MCF 10A (cell line): ENCODE measurements at regions of chr1 and their contacts with region 1.

Region 1: GRCh38 chr1:229227298-229227919 is 43.5 kb upstream of the RAB4A start:
- DNase-seq: peak; percentile 94
- H3K4me3 Mint-ChIP-seq: peak overlapping the region; percentile 5
- H3K27ac Mint-ChIP-seq: peak overlapping the region; percentile 1
- H3K4me1 Mint-ChIP-seq: peaks cover 66% of the 10 kb centered on the region
- H3K27me3 Mint-ChIP-seq: no peaks in the 10 kb centered on the region
- CTCF ChIP-seq: peak; percentile 99

Region 2: DNA sequence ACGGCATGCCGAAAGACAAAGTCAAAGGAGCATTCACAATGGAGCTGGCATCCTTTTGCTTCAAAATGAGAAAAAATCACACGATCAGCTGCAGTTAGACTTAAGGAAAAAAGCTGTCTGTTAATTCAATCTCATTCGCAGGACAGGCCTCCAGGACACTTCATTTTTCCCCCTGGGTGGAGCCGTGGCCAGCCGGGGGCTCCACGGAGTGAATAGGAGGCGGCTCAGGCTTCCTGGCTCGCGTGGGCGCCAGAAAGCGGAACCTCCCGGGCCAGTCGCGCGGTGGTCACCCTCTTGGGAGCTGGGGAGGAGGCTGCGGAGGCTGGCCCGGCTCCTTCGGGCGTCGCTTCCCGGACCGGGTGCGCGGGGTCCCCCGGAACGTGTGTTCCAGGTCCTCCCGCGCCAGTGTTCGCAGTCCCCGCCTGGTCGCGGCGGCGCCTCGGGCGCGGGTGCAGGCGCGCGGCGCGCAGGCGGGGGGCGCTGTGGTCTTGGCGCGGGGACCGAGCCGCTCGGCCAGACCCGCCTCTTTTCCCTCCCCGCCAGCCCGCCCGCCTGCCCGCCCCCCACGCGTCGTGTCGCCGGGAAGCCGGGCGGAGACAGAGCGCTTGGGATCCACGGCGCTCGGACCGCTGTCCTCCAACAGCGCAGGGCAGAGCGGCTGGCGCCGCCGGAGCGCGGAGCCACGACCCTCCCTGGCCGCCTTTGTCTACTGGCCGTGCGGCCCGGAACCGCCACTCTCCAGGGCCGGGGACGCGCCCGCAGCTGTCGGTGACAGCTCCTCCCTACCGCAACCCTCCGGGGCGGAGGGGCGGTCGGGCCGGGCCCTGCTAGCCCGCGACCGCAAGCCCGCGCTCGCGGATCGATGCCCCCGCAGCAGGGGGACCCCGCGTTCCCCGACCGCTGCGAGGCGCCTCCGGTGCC is 492.3 kb before region 1 on chr1 and contains the start of gene RHOU:
- CTCF ChIA-PET with region 1: interaction called, 95 read pairs
- POLR2A ChIA-PET with region 1: interaction called, 32 read pairs
- intact Hi-C with region 1: loop called (anchors 1 kb)
- DNase-seq: peak; percentile 55
- H3K4me3 Mint-ChIP-seq: peak within 1 kb of the TSS; percentile 72
- H3K27ac Mint-ChIP-seq: peak within 1 kb of the TSS; percentile 61
- H3K4me1 Mint-ChIP-seq: peaks cover 12% of the 10 kb centered on the region
- H3K27me3 Mint-ChIP-seq: peaks cover 9% of the 10 kb centered on the region
- CTCF ChIP-seq: peak; percentile 98
- total RNA-seq, gene RHOU: 2.1 and 3.6 TPM in 2 replicates

Region 3: DNA sequence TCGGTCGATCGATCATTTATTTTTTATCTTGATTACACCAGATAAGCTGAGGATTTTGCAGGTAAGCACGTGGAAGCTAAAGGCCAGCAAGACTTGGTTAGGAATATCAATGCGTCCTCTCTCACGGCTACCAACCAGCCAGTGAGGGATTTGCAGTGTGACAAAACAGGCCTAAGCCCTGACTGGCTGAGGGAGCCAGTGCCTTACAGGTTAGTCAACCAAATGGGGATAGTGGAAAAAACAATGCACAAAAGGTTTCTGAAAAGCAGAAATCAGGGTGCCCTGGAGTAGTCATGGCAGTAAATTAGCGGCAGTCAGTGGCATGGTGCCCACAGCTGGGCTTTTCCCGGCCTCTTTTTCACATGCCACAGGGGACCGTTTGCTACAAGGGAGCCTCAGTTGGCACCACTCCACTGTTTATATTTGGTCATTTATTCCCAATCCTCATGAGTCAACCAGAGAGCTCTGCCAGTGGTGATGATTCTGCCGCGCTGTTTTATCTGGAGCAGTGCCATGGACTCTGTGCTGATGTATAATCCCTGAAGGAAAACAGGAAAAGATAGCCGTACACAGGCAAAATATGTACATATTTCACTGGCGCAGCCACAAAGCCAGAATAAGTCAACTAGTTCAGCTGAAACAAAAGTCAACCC is 324.5 kb before region 1 on chr1:
- CTCF ChIA-PET with region 1: interaction called, 5 read pairs
- POLR2A ChIA-PET with region 1: interaction called, 18 read pairs
- intact Hi-C with region 1: loop called (anchors 1 kb)
- DNase-seq: peak; percentile 100
- H3K4me3 Mint-ChIP-seq: peak overlapping the region; percentile 57
- H3K27ac Mint-ChIP-seq: peak overlapping the region; percentile 89
- H3K4me1 Mint-ChIP-seq: peaks cover 30% of the 10 kb centered on the region
- H3K27me3 Mint-ChIP-seq: peaks cover 75% of the 10 kb centered on the region
- CTCF ChIP-seq: no peak

Region 4: DNA sequence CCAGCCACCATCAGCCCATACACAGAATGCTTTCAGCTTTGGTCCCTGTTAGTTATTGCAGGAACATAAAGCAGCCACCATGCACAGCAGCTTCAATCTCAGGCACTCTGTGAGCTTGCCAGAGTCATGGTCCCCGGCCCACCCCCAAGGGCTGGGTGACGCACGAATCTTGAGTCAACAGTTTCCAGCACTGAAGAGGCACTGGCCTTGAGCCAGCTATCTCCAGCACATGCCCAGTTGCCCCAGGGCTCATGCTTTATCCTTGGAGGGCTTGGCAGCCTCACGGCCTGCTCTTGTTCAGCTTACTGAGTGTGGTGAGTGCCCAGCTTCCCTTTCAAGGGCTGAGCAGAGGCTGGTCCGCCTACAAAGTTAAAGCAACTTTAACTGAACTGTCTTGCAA is 157.2 kb before region 1 on chr1:
- CTCF ChIA-PET with region 1: interaction called, 6 read pairs
- POLR2A ChIA-PET with region 1: interaction called, 11 read pairs
- intact Hi-C with region 1: no loop called
- DNase-seq: peak; percentile 100
- H3K4me3 Mint-ChIP-seq: no peak overlapping the region
- H3K27ac Mint-ChIP-seq: no peak overlapping the region
- H3K4me1 Mint-ChIP-seq: peaks cover 23% of the 10 kb centered on the region
- H3K27me3 Mint-ChIP-seq: peaks cover 20% of the 10 kb centered on the region
- CTCF ChIP-seq: no peak

Region 5: DNA sequence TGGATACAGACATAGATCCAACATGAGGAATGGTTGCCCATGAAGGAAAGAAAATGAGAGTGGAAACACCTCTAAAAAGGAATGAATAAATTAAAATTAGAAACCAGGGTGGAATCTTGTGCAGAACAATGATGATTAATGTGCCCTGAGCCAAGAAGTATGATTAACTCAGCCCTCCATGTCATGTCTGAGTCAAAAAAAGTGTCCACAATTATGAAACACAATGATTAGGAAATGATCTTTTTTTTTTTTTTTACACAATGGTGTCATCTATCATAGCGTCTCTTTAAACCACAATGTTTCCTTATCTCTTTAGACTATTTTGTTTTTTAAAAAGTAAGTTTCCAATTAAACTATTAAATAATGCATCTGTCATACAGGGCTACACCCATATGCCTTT is 35.4 kb before region 1 on chr1:
- CTCF ChIA-PET with region 1: interaction called, 9 read pairs
- POLR2A ChIA-PET with region 1: interaction called, 23 read pairs
- intact Hi-C with region 1: no loop called
- DNase-seq: peak; percentile 94
- H3K4me3 Mint-ChIP-seq: peak overlapping the region; percentile 35
- H3K27ac Mint-ChIP-seq: peak overlapping the region; percentile 80
- H3K4me1 Mint-ChIP-seq: peaks cover 41% of the 10 kb centered on the region
- H3K27me3 Mint-ChIP-seq: no peaks in the 10 kb centered on the region
- CTCF ChIP-seq: no peak

Region 6: DNA sequence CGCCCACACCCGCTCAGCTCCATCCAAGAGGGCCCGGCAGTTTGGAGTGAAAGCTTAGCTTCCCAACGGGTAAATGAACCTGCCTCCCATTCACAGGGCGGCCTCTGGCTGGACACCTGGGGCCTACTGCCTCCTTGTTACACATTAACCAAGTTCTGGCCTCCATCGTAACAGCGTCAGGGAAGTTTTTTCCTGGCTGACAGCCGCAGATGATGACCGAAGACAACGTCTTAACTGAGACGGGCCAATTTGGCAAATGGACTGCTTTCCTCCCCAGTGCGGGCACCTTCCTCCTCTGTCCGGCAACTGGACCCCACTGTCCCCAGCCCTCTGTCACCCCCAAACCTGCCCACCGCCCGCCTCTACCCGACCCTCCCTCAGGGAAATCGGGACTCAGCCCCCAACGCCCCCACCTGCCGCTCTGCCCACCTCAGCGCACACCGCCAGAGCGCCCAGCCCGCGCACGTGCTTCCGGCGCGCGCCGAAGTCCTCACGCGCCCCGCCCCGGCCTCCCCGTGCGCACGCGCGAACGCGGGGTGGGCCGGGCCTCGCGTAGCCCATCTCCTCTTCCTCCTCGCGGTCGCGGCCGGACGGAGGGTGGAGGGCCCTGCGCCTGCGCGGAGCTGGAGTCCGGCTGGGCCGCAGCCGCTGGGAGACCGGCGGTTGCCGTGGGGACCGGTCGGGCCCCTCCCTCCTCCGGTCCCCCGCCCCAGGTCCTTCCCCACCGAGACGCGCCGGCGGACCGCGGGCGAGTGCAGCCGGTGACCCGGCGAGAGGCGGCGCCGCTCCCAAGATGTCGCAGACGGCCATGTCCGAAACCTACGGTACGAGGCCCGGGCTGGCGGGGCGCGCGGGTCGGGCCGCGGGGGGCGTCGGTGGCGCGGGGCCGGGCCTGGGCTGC is 43.4 kb after region 1 on chr1 and contains the start of gene RAB4A:
- CTCF ChIA-PET with region 1: interaction called, 19 read pairs
- POLR2A ChIA-PET with region 1: interaction called, 76 read pairs
- intact Hi-C with region 1: no loop called
- DNase-seq: peak; percentile 96
- H3K4me3 Mint-ChIP-seq: peak within 1 kb of the TSS; percentile 80
- H3K27ac Mint-ChIP-seq: peak within 1 kb of the TSS; percentile 77
- H3K4me1 Mint-ChIP-seq: peaks cover 48% of the 10 kb centered on the region
- H3K27me3 Mint-ChIP-seq: no peaks in the 10 kb centered on the region
- CTCF ChIP-seq: no peak
- total RNA-seq, gene RAB4A: 87.4 and 88.6 TPM in 2 replicates